PC-9 (cell line): ENCODE measurements at regions of chr6 and their contacts with region 1.

Region 1: GRCh38 chr6:705047-705446 is 12.1 kb upstream of the EXOC2 start:
- DNase-seq: no peak
- H3K4me3 ChIP-seq: no peak overlapping the region
- H3K27ac ChIP-seq: no peak overlapping the region
- H3K4me1 ChIP-seq: no peaks in the 10 kb centered on the region
- H3K27me3 ChIP-seq: no peaks in the 10 kb centered on the region
- CTCF ChIP-seq: no peak

Region 2: GRCh38 chr6:692855-693722 is 12.0 kb before region 1 on chr6 and contains the start of gene EXOC2:
- CTCF ChIA-PET with region 1: no interaction called
- POLR2A ChIA-PET with region 1: interaction called, 26 read pairs
- intact Hi-C with region 1: no loop called
- DNase-seq: peak; percentile 56 to 81
- H3K4me3 ChIP-seq: peak within 1 kb of the TSS; percentile 80
- H3K27ac ChIP-seq: peak within 1 kb of the TSS; percentile 49; the same call in 1 of the 2 replicates
- H3K4me1 ChIP-seq: peaks cover 6% of the 10 kb centered on the region; the same call in 1 of the 2 replicates
- H3K27me3 ChIP-seq: no peaks in the 10 kb centered on the region
- CTCF ChIP-seq: no peak
- total RNA-seq, gene EXOC2: 21.3 and 28.2 TPM in 2 replicates